ENCODE measurements at regions of chr12 and their contacts with region 1.

Region 1: DNA sequence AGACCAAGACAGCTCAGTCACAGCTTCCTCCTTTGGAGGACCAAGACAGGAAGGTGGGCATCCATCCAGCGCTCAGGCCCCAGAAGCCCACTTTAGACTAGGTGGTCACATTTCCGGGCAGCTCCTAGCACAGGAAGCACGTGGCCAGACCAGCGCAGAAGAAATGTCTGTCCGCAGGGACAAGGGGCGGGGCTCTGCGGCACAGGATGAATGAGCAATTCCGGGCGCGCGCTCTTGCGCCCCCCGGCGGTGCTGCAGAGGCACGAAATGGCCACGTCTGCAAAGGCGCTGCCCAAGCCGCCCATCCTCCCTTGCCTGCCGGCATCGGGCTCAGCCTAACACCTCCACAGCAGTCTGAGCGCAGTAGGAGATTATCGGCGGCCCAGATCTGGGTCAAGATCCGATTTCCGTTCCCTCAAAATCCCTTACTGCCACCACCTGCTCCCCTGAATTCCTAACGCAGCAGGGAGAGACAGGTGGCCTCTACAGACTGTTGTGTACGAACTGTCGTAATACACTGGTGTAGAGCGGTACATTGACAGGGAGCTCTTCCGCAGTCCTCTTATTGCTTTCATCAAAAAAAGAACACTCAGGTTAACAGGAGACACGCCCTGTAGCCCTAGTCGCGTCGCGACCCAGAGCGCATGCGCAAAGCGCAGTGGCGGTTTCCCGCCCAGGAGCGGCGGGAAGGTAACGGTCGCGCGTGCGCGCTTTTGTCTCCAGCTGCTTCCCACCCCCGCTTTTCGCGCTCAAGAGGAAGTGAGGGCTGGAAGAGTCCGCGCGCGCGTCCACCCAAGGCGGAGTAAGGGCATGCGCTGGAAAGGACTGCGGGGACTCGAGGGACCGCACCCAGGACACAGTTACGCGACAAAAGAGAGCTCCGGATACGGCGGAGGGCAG is 794 bp downstream of the TUBA1B start:
- DNase-seq: peak; percentile 85

Region 2: DNA sequence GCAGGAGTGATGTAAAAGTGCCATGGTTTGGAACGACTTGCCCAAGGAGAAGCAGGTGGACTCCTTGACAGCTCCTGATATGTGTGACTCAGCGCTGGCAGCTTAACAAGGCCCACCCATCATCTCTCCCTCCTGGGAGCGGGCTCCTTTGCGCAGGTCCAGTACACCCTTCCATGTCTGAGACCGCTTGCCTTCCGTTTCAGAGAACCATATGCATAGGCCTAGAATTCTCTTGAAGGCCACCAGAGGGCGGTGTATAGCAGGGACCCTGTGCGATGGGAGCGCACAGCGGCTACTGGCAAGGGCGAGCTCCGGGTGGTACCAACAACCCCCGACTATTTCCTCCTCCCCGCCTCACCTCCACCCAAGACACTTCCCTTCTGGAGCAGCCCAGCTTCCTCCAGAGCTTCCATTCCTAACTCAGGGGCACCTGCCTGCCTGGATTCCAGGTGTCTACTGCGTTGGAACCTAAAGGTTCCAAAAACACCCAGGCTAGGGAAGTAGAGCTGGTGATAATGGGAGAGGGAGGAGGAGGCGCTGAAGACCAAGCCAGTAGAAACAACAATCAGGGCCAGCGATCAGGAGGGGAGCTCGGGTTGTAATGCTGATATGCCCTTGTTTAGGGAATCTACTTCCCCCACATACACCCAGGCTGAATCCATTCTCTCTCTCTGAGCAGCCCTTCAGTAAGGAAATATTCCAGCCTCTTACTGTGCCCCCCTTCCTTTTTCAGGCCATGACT is 42.0 kb before region 1 on chr12:
- CTCF ChIA-PET with region 1: interaction called, 8 read pairs
- POLR2A ChIA-PET with region 1: interaction called, 28 read pairs
- DNase-seq: peak; percentile 86

Region 3: GRCh38 chr12:49146406-49146805 is 16.0 kb after region 1 on chr12:
- CTCF ChIA-PET with region 1: interaction called, 3 read pairs
- POLR2A ChIA-PET with region 1: interaction called, 36 read pairs
- DNase-seq: no peak

Region 4: GRCh38 chr12:49198431-49199155 is 68.2 kb after region 1 on chr12:
- CTCF ChIA-PET with region 1: no interaction called
- POLR2A ChIA-PET with region 1: interaction called, 17 read pairs
- DNase-seq: no peak

Region 5: GRCh38 chr12:49244176-49244575 is 113.8 kb after region 1 on chr12:
- CTCF ChIA-PET with region 1: interaction called, 4 read pairs
- POLR2A ChIA-PET with region 1: interaction called, 34 read pairs
- DNase-seq: no peak

Region 6: GRCh38 chr12:49342066-49342913 is 211.9 kb after region 1 on chr12:
- CTCF ChIA-PET with region 1: interaction called, 3 read pairs
- POLR2A ChIA-PET with region 1: interaction called, 12 read pairs
- DNase-seq: peak; percentile 88